Caco-2 (cell line): ENCODE measurements at regions of chr15 and their contacts with region 1.

Region 1: GRCh38 chr15:39095218-39095879 is 485.5 kb upstream of the THBS1 start:
- DNase-seq: peak in 1 of 2 experiments; percentile 17
- H3K4me3 ChIP-seq: no peak overlapping the region
- H3K4me3 Mint-ChIP-seq: no peak overlapping the region
- H3K27ac Mint-ChIP-seq: no peak overlapping the region
- H3K4me1 ChIP-seq: peaks cover 11% of the 10 kb centered on the region; the same call in 1 of the 2 replicates
- H3K4me1 Mint-ChIP-seq: peaks cover 10% of the 10 kb centered on the region
- H3K27me3 ChIP-seq: no peaks in the 10 kb centered on the region
- H3K27me3 Mint-ChIP-seq: no peaks in the 10 kb centered on the region
- CTCF ChIP-seq: no peak

Region 2: GRCh38 chr15:38733331-38733730 is 362.0 kb before region 1 on chr15:
- CTCF ChIA-PET with region 1: no interaction called
- POLR2A ChIA-PET with region 1: no interaction called
- intact Hi-C with region 1: no loop called
- DNase-seq: no peak
- H3K4me3 ChIP-seq: no peak overlapping the region
- H3K4me3 Mint-ChIP-seq: no peak overlapping the region
- H3K27ac Mint-ChIP-seq: no peak overlapping the region
- H3K4me1 ChIP-seq: no peaks in the 10 kb centered on the region
- H3K4me1 Mint-ChIP-seq: peaks cover 7% of the 10 kb centered on the region
- H3K27me3 ChIP-seq: no peaks in the 10 kb centered on the region
- H3K27me3 Mint-ChIP-seq: peaks cover 9% of the 10 kb centered on the region
- CTCF ChIP-seq: no peak

Region 3: GRCh38 chr15:39040861-39041260 is 54.5 kb before region 1 on chr15:
- CTCF ChIA-PET with region 1: no interaction called
- POLR2A ChIA-PET with region 1: no interaction called
- intact Hi-C with region 1: no loop called
- DNase-seq: no peak
- H3K4me3 ChIP-seq: no peak overlapping the region
- H3K4me3 Mint-ChIP-seq: no peak overlapping the region
- H3K27ac Mint-ChIP-seq: no peak overlapping the region
- H3K4me1 ChIP-seq: no peaks in the 10 kb centered on the region
- H3K4me1 Mint-ChIP-seq: no peaks in the 10 kb centered on the region
- H3K27me3 ChIP-seq: no peaks in the 10 kb centered on the region
- H3K27me3 Mint-ChIP-seq: no peaks in the 10 kb centered on the region
- CTCF ChIP-seq: no peak

Region 4: DNA sequence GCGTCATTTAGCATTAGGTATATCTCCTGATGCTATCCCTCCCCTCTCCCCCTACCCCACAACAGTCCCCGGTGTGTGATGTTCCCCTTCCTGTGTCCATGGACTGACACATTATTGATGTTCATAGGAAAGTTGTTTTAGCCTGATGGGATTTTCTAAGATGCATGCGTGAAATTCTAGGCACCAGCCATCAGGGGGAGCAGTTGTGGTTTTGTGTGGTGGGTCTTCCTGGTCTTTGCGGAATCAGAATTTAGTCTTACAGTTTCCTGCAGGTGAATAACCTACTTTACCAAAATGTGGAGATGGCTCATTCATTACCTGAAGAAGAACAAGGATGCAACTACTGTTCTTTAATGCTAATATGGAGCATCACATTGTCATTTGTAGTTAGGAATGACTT is 30.6 kb after region 1 on chr15:
- CTCF ChIA-PET with region 1: no interaction called
- POLR2A ChIA-PET with region 1: interaction called, 13 read pairs
- intact Hi-C with region 1: no loop called
- DNase-seq: peak in 1 of 2 experiments; percentile 52
- H3K4me3 ChIP-seq: no peak overlapping the region
- H3K4me3 Mint-ChIP-seq: no peak overlapping the region
- H3K27ac Mint-ChIP-seq: no peak overlapping the region
- H3K4me1 ChIP-seq: peaks cover 37% of the 10 kb centered on the region
- H3K4me1 Mint-ChIP-seq: peaks cover 22% of the 10 kb centered on the region
- H3K27me3 ChIP-seq: no peaks in the 10 kb centered on the region
- H3K27me3 Mint-ChIP-seq: no peaks in the 10 kb centered on the region
- CTCF ChIP-seq: peak; percentile 57 to 65